ENCODE measurements at regions of chr5 and their contacts with region 1.

Region 1: GRCh38 chr5:111550279-111551020 is 38.1 kb upstream of the STARD4 start:
- DNase-seq: peak; percentile 76
- H3K4me3 Mint-ChIP-seq: no peak overlapping the region
- H3K27ac Mint-ChIP-seq: no peak overlapping the region
- H3K4me1 Mint-ChIP-seq: peaks cover 18% of the 10 kb centered on the region
- H3K27me3 Mint-ChIP-seq: peaks cover 1% of the 10 kb centered on the region

Region 2: DNA sequence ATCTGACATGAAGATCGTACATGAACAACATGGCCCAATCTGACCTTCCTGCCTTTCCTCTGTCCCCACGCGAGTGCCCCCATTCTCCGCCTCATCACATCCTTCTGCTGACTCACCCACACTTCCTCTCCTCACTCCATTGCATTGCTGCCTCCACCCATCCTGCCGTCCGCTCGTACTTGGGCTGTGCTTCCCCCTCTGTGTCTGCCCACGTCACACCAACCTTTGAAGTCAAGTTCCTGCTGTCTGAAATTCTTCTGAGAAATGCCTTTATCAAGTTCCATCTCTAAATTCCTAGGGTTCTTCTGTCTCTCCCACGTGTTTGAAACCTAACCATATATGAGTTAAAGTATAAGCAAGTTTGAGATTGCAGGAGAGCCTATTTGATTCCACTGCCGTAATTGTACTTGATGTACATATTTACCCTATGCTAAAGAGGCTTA is 20.1 kb before region 1 on chr5:
- CTCF ChIA-PET with region 1: interaction called, 21 read pairs
- POLR2A ChIA-PET with region 1: no interaction called
- intact Hi-C with region 1: loop called (anchors 1 kb)
- DNase-seq: peak; percentile 88
- H3K4me3 Mint-ChIP-seq: peak overlapping the region; percentile 54
- H3K27ac Mint-ChIP-seq: peak overlapping the region; percentile 85
- H3K4me1 Mint-ChIP-seq: peaks cover 17% of the 10 kb centered on the region
- H3K27me3 Mint-ChIP-seq: no peaks in the 10 kb centered on the region

Region 3: GRCh38 chr5:111668477-111669414 is 118.3 kb after region 1 on chr5:
- CTCF ChIA-PET with region 1: interaction called, 8 read pairs
- POLR2A ChIA-PET with region 1: no interaction called
- intact Hi-C with region 1: loop called (anchors 10 kb)
- DNase-seq: no peak
- H3K4me3 Mint-ChIP-seq: no peak overlapping the region
- H3K27ac Mint-ChIP-seq: no peak overlapping the region
- H3K4me1 Mint-ChIP-seq: no peaks in the 10 kb centered on the region
- H3K27me3 Mint-ChIP-seq: peaks cover 3% of the 10 kb centered on the region

Region 4: DNA sequence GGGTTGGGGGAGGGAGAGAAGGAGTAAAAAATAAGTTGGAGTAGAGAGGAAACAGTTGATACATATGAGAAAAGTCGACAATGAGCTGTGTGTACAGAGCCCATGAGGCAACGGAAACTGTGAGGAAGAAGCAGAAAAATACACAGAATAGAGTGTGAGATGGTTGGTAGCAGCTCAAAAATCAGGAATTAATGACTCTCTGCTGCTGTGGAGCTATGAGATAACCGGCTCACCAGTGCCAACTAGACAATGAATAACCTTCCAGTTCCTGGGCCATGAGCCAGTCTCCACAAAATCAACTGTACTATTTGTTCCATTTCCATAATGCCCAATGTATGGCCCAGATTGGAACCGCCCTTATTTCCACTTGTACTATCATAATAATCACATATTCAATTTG is 259.7 kb after region 1 on chr5:
- CTCF ChIA-PET with region 1: interaction called, 3 read pairs
- POLR2A ChIA-PET with region 1: no interaction called
- intact Hi-C with region 1: loop called (anchors 10 kb)
- DNase-seq: no peak
- H3K4me3 Mint-ChIP-seq: no peak overlapping the region
- H3K27ac Mint-ChIP-seq: no peak overlapping the region
- H3K4me1 Mint-ChIP-seq: no peaks in the 10 kb centered on the region
- H3K27me3 Mint-ChIP-seq: no peaks in the 10 kb centered on the region

Region 5: DNA sequence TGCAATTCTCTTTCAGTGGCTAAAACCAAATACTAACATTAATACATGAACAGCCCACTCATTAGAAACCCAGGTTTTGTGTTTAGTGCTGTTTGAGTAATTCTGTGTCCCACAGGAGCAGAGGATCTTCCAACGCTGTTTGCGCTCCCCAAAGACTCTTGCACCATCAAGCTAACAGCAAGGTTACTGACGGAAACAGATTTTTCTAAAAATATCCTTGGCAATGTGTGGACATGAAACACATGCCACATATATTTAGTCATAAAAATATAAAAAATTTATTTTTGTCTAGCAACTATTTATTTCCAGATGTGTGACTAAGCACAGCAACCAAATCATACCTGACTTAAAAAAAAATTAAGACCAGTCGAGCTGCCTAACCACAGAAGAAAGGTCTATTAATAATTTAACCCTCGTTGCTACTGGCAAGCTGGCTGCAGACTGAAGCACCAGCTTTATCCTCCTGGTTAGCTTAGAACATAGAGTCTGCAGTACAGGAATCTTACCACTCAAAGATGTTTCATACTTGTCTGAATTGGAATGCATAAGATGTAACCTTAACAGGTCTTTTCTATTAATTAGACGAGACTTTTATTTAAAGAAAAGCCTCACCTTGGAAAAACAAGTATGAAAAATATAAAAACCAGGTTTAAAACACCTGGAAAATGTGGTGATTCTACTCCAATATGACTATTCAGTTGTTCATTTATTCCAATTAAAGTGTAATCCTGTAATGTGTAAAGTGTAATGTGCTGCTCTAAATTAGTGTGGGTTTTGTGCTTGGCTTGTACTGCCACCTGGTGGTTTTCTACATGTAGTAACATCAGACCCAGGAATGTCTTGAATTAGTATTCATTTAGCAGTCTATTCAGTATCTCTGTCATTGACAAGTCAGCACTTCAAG is 596.1 kb after region 1 on chr5:
- CTCF ChIA-PET with region 1: interaction called, 56 read pairs
- POLR2A ChIA-PET with region 1: no interaction called
- intact Hi-C with region 1: loop called (anchors 1 kb)
- DNase-seq: peak; percentile 64
- H3K4me3 Mint-ChIP-seq: no peak overlapping the region
- H3K27ac Mint-ChIP-seq: peak overlapping the region; percentile 45
- H3K4me1 Mint-ChIP-seq: no peaks in the 10 kb centered on the region
- H3K27me3 Mint-ChIP-seq: peaks cover 9% of the 10 kb centered on the region